ENCODE measurements at regions of chr1 and their contacts with region 1.

Region 1: DNA sequence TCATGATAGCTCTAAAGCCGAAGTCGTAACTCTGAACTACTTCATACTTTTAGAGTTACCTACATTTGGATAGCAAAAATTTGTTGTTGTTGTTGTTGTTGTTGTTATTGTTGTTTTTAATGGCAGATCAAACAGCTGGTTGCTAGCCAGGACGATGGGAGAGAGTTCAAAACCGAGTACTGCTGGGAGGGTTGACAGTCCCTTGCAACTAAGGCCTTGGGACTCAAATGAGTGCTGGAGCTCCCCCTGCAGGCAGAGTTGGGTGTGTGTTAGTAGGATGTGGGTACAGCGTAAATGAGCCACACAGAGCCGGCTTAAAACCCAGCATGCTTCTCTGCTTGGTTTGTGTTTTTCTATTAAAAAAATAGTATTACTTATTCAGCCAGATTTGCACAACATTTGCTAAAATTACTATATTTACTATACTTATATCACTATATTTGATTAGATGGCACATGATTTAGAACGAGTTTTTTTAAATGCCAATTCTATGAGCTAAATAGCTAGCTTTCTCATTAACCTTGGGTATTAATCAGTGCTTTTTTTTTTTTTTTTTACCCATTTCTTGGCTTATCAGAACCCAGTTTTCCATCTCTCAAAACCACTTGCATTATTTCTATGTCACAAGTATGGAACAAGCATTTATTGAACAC is 129.2 kb upstream of the SYT6 start:
- DNase-seq: peak; percentile 87 to 95 (median 92)
- H3K4me3 ChIP-seq: no peak overlapping the region
- H3K27ac ChIP-seq: no peak overlapping the region
- H3K4me1 ChIP-seq: no peaks in the 10 kb centered on the region
- H3K27me3 ChIP-seq: peaks cover 0 to 5% (median 0%) of the 10 kb centered on the region in 5 experiments

Region 2: GRCh38 chr1:113978863-113979702 is 303.8 kb before region 1 on chr1 and contains the start of gene OLFML3:
- CTCF ChIA-PET with region 1: interaction called, 44 read pairs
- POLR2A ChIA-PET with region 1: interaction called, 7 read pairs
- DNase-seq: peak; percentile 54 to 75 (median 74)
- H3K4me3 ChIP-seq: peak within 1 kb of the TSS in 1 of 7 experiments; percentile 11
- H3K27ac ChIP-seq: no peak within 1 kb of the TSS
- H3K4me1 ChIP-seq: peaks cover 19 to 74% (median 53%) of the 10 kb centered on the region in 4 experiments
- H3K27me3 ChIP-seq: peaks cover 0 to 13% (median 0%) of the 10 kb centered on the region in 5 experiments

Region 3: DNA sequence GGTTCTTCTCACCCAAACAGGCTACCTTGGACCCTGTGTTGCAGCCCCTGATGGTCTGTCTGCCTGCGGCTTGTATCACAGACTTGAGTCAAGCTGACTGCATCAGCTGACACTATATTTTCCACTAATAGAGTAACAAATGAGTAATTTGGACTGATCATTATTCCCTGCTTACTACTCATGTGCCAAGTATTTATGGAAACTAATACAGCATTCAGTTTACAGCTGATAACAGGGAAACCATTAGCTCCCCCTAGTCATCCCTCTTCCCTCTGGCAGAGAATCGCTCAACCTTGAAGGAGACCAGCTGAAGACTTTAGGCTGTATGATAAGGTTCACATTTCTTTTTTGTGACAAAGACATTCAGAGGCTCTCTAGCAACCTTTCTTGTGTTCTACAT is 12.6 kb before region 1 on chr1:
- CTCF ChIA-PET with region 1: interaction called, 20 read pairs
- POLR2A ChIA-PET with region 1: interaction called, 5 read pairs
- DNase-seq: no peak
- H3K4me3 ChIP-seq: no peak overlapping the region
- H3K27ac ChIP-seq: no peak overlapping the region
- H3K4me1 ChIP-seq: no peaks in the 10 kb centered on the region
- H3K27me3 ChIP-seq: peaks cover 0 to 3% (median 0%) of the 10 kb centered on the region in 5 experiments

Region 4: GRCh38 chr1:114511032-114511785 is 228.3 kb after region 1 on chr1 and contains the start of gene TRIM33:
- CTCF ChIA-PET with region 1: no interaction called
- POLR2A ChIA-PET with region 1: no interaction called
- DNase-seq: peak; percentile 96 to 98 (median 98)
- H3K4me3 ChIP-seq: peak within 1 kb of the TSS; percentile 80 to 98 (median 91)
- H3K27ac ChIP-seq: peak within 1 kb of the TSS; percentile 93 to 98
- H3K4me1 ChIP-seq: peaks cover 9 to 38% (median 27%) of the 10 kb centered on the region in 4 experiments
- H3K27me3 ChIP-seq: no peaks in the 10 kb centered on the region

Measured in common myeloid progenitor, CD34-positive (primary cell).